BJ (cell line): ENCODE measurements at regions of chr2 and their contacts with region 1.

Region 1: GRCh38 chr2:110170102-110170501 is 34.7 kb downstream of the NPHP1 start:
- DNase-seq: no peak
- H3K4me3 ChIP-seq: no peak overlapping the region
- H3K27me3 ChIP-seq: no peaks in the 10 kb centered on the region
- CTCF ChIP-seq: no peak

Region 2: DNA sequence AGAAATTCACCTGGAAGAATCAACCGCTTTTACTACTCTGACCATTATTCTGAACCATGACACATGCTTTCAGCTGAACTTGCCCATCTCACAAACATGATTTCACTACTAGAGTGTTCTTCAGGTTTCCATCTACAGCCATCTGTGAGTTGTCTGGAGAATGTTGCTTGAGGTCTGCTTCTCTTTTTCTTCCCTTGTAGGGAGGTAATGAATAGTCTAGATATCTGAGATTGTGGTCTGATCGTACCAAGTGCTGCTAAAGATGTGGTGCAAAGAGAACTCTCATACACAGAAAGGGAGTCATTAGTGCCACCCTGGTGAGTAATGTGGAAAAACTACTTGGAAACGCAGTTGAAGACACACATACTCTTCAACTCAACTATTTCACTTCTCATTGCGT is 545.8 kb before region 1 on chr2:
- CTCF ChIA-PET with region 1: no interaction called
- POLR2A ChIA-PET with region 1: no interaction called
- DNase-seq: no peak
- H3K4me3 ChIP-seq: no peak overlapping the region
- H3K27me3 ChIP-seq: no peaks in the 10 kb centered on the region
- CTCF ChIP-seq: no peak

Region 3: GRCh38 chr2:110124939-110125691 is 45.0 kb before region 1 on chr2:
- CTCF ChIA-PET with region 1: no interaction called
- POLR2A ChIA-PET with region 1: no interaction called
- DNase-seq: no peak
- H3K4me3 ChIP-seq: no peak overlapping the region
- H3K27me3 ChIP-seq: no peaks in the 10 kb centered on the region
- CTCF ChIP-seq: no peak

Region 4: DNA sequence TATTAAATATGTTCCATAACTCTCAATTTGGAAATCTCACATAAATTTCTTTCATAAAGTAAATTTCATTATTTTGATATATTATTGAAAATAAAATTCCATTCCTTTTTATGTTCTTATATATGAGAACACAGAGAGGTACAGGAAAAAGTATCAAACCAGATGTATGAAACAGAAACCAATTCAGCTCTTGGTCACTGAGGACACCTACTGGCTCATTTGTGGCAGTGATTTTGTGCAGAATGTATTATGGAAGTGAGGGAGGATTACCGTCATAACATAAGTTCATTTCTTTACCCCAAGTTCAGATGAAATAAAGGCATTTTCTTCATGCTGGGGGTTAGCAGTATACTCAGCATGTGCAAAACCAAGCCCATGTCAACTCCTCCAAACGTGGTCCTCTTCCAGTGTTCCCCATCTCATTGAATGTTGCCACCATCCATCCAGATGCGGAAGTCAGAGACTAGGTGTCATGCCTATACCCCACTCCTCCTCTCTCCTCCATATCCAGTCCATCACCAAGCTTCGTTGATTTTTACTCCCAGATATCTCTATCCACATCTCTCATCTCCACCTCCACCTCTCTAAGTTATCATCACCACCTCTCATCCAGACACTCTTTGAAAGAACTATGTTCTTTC is 12.8 kb before region 1 on chr2:
- CTCF ChIA-PET with region 1: interaction called, 14 read pairs
- POLR2A ChIA-PET with region 1: no interaction called
- DNase-seq: peak; percentile 8
- H3K4me3 ChIP-seq: no peak overlapping the region
- H3K27me3 ChIP-seq: no peaks in the 10 kb centered on the region
- CTCF ChIP-seq: peak; percentile 79